ENCODE measurements at regions of chr3 and their contacts with region 1.

Region 1: GRCh38 chr3:114056130-114057010 is at the starts of genes CCDC191 and QTRT2:
- DNase-seq: peak; percentile 98
- H3K4me3 Mint-ChIP-seq: peak within 1 kb of the TSS; percentile 98
- H3K27ac Mint-ChIP-seq: peak within 1 kb of the TSS; percentile 97
- H3K4me1 Mint-ChIP-seq: peaks cover 53% of the 10 kb centered on the region
- H3K27me3 Mint-ChIP-seq: peaks cover 2% of the 10 kb centered on the region
- total RNA-seq, gene CCDC191: 1.1 and 2.1 TPM in 2 replicates
- total RNA-seq, gene QTRT2: 54.9 and 57.6 TPM in 2 replicates

Region 2: DNA sequence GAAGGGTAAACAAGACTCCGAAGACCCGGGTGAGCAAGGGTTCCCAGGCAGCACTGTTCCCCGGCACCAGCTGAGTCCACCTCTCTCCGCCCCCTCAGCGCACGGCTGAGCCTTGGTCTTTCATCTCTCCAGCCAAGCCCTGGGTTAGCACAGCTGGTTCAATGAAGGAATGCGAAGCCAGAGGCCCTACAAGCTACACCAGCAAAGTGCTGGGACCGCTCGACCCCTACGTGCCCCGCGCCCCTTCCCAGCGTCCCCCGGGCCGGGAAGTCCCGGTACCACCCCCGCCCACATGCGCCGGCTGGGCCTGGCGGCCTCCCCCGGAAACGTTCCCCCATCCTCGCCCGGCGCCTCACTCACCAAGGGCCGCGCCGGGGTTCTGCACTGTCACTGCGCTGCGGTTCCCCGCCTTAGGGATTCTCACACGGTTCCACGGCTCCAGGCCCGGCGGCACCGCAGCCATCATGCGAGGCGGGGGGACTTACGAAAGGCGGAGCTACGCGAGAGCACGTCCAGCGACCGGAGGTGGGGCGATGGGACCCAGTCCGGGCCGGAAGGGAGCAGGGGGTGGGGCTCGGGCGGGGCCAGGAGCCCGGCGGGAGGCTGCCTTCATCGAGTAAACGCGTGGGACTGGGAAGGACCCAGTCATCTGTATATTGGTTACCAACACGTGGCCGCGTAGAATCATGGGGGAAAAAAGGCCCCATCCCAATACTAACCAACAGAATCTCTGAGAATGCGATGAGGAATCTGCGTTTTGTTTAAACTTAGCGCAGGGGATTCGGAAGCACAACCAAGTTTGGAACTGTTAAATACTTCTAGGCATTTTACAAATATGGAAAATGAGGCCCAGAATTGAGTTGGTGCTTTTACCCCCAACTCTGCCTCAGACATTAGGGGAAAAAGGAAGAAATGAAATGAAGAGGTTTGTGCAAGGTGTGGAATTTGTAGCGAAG is 1036.9 kb before region 1 on chr3:
- intact Hi-C with region 1: loop called (anchors 2 kb)
- DNase-seq: peak; percentile 77
- H3K4me3 Mint-ChIP-seq: peak overlapping the region; percentile 91
- H3K27ac Mint-ChIP-seq: peak overlapping the region; percentile 89
- H3K4me1 Mint-ChIP-seq: peaks cover 58% of the 10 kb centered on the region
- H3K27me3 Mint-ChIP-seq: no peaks in the 10 kb centered on the region

Region 3: DNA sequence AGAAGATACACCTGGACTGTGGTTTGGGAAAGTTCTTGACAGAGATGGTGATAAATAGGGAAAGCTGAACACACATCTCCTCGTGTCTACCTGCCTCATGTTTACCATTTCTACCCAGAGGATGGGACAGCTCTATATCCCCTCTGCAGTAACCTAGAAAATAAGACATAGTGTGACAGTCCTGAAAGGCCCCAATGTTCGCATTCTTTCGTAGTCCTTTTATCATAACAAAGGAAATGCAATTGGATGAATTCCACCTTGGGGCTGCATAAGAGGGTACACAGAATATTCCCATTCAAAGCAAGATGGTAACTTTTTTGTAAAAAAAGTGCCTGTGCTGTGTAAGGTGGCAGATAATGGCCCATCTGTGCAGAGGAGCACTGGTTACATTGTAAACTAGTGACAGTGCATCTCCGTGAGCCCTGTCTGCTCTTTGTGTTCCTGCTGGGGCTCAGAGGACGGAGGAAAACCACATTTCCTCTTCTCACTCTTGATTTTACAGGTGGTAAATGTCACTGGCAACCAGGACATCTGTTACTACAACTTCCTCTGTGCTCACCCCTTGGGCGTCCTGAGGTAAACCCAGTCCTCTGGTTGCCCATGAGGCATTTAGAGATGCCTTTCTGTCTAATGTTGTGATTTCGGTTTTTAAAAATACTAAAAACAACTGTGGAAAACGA is 449.7 kb before region 1 on chr3:
- intact Hi-C with region 1: no loop called
- DNase-seq: peak; percentile 47
- H3K4me3 Mint-ChIP-seq: no peak overlapping the region
- H3K27ac Mint-ChIP-seq: no peak overlapping the region
- H3K4me1 Mint-ChIP-seq: peaks cover 24% of the 10 kb centered on the region
- H3K27me3 Mint-ChIP-seq: no peaks in the 10 kb centered on the region

Region 4: DNA sequence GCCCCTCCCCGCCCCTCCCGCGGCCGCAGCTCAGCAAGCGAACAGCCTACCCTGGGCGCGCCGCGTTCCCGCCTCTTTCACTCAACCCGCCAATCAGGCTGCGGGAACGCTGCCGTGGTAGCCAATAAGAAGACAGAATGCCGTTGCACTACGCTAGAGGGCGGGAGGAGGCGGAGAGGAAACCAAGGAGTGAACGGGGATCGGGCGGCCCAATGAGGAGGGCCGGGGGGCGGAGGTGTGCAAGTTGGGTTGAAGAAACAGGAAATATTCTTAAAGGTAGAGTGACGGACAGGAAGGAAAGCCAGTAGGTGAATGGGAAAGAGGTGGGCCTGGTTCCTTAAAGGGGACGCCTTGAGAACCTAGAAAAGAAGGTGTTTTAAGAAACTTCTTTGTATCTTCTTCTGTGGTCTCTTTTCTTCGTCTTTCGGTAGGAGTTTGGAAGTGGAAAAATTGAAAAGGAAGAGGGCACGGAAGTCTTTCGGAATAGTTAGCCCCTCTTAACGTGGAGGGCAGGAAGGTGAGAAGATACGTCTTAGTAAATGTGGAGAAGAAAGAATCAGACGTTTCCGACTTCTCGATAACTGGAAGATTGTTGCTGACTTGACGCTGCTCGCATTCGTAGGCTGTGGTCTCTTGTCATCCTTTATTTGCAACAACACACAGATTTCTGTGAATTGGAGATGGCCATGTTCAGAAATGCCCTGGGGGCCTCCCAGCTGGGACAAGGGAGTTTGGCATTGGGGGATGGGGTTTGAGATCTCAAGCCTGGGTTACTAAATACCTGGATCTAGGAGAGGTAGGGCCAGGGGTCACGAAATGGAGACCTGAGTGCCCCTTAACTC is 359.5 kb before region 1 on chr3:
- intact Hi-C with region 1: loop called (anchors 1 kb)
- DNase-seq: peak; percentile 99
- H3K4me3 Mint-ChIP-seq: no peak overlapping the region
- H3K27ac Mint-ChIP-seq: no peak overlapping the region
- H3K4me1 Mint-ChIP-seq: peaks cover 20% of the 10 kb centered on the region
- H3K27me3 Mint-ChIP-seq: no peaks in the 10 kb centered on the region

Region 5: DNA sequence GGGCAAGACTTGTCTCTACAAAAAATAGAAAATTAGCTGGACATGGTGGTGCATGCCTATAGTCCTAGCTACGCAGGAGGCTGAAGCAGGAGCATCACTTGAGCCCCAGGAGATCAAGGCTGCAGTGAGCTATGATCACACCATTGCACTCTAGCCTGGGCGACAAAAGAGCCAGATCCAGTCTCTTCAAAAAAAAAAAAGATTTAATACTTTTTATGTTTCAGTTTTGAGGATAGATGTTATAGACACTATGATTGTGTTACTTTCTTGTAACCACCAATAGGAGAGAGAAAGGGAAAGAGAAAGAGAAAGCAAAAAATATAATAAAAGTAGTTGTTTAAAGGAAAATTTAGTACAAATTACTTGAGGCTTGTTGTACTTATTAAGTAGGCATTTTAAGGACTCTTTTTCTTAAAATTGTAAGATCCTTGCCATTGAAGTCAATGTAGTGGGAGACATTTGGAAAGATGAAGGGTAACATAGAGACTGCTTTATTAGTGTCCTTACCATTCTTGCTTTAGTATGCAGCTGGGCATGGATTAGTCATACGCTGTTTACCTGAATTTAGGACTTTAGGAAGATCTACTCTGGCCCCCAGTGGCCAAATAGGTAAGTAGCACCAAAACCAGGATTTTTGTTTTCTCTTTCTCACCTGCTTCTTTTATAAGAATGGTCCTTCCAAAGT is 143.7 kb before region 1 on chr3:
- intact Hi-C with region 1: loop called (anchors 1 kb)
- DNase-seq: peak; percentile 8
- H3K4me3 Mint-ChIP-seq: no peak overlapping the region
- H3K27ac Mint-ChIP-seq: no peak overlapping the region
- H3K4me1 Mint-ChIP-seq: peaks cover 7% of the 10 kb centered on the region
- H3K27me3 Mint-ChIP-seq: no peaks in the 10 kb centered on the region

Region 6: GRCh38 chr3:114112696-114113095 is 56.3 kb after region 1 on chr3:
- intact Hi-C with region 1: no loop called
- DNase-seq: no peak
- H3K4me3 Mint-ChIP-seq: no peak overlapping the region
- H3K27ac Mint-ChIP-seq: no peak overlapping the region
- H3K4me1 Mint-ChIP-seq: no peaks in the 10 kb centered on the region
- H3K27me3 Mint-ChIP-seq: no peaks in the 10 kb centered on the region

Region 7: DNA sequence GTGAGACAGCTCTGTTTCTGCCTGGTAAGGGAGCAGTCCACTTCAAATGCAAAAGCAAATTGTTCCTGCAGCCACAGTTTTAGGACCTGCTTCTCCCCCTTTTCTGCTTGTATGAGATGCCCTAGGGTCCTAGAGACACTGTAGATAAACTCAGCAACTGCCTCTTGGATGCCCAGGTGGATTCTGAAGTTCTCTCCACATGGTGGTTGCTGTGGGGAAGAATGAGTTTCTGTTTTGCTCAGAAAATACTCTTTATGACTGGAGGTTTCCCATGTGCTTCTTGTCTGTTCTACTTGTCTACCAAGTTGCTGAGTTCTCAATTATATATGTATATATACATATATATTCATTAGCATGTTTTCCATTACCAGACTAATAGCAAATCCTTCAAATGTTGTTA is 186.6 kb after region 1 on chr3:
- intact Hi-C with region 1: loop called (anchors 5 kb)
- DNase-seq: peak; percentile 24
- H3K4me3 Mint-ChIP-seq: no peak overlapping the region
- H3K27ac Mint-ChIP-seq: peak overlapping the region; percentile 45
- H3K4me1 Mint-ChIP-seq: peaks cover 23% of the 10 kb centered on the region
- H3K27me3 Mint-ChIP-seq: peaks cover 4% of the 10 kb centered on the region

Region 8: DNA sequence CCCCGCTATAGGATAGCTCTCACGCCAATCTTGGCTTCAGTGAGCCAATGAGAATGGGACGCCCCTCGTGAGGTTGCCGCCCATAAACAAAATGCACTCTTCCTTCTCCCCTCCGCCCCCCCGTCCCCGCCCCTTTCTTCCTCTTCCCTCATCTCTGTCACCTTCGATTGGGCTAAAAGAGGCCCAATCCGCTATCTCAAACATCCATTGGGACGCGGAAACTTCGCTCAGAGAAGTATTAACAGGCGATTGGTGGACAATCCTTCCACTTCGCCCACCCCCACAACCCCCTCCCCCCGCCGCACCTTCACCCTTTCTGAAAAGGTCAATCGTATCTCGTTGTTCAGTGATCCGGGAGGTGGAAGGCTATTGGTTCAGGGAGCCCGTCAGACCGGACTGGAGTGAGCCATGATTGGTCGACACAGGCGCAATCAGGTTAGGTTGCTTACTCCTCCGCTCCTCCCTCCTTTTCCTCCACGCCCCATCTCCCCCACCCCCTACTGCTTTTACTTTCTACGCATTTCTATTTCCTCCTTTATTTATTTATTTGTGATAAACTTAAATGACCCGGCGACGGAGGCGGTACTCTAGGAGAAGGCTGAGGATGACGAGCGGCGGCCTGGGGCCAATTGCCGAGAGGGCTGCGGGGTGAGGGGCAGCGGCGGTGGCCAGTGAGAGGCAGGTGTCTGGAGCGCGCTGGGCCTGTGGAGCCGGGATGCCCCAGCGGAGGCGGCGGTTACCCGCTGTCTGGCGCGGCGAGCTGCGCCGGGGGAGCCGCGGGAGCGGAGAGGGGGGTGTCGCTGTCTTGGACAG is 1091.2 kb after region 1 on chr3:
- intact Hi-C with region 1: loop called (anchors 1 kb)
- DNase-seq: peak; percentile 96
- H3K4me3 Mint-ChIP-seq: peak overlapping the region; percentile 96
- H3K27ac Mint-ChIP-seq: peak overlapping the region; percentile 98
- H3K4me1 Mint-ChIP-seq: peaks cover 16% of the 10 kb centered on the region
- H3K27me3 Mint-ChIP-seq: no peaks in the 10 kb centered on the region